PC-3 (cell line): ENCODE measurements at regions of chr17 and their contacts with region 1.

Region 1: DNA sequence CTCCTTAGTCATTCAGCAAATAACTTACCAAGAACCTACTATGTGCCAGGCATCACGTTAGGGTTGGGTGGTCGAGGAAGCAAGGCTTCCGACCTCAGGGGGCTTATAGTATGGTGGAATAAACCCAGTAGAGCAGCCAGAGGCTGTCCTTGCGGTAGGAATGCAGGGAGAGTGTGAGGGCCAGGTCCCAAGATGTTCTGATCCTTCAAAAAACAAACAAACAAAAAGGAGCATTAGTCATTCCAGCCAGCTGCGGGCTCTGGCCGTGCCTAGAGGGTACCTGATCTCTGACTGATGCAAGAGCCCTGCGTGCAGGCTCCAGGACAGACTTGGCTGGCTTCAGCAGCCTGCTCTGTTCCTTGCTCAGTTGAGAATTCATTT is 18.2 kb downstream of the CYB5D2 start:
- DNase-seq: peak; percentile 86
- ATAC-seq: peak; percentile 96
- H3K4me3 ChIP-seq: no peak overlapping the region
- H3K27ac ChIP-seq: peak overlapping the region; percentile 80
- H3K4me1 ChIP-seq: peaks cover 26% of the 10 kb centered on the region
- H3K27me3 ChIP-seq: no peaks in the 10 kb centered on the region
- CTCF ChIP-seq: no peak; the same call in 1 of the 2 replicates

Region 2: DNA sequence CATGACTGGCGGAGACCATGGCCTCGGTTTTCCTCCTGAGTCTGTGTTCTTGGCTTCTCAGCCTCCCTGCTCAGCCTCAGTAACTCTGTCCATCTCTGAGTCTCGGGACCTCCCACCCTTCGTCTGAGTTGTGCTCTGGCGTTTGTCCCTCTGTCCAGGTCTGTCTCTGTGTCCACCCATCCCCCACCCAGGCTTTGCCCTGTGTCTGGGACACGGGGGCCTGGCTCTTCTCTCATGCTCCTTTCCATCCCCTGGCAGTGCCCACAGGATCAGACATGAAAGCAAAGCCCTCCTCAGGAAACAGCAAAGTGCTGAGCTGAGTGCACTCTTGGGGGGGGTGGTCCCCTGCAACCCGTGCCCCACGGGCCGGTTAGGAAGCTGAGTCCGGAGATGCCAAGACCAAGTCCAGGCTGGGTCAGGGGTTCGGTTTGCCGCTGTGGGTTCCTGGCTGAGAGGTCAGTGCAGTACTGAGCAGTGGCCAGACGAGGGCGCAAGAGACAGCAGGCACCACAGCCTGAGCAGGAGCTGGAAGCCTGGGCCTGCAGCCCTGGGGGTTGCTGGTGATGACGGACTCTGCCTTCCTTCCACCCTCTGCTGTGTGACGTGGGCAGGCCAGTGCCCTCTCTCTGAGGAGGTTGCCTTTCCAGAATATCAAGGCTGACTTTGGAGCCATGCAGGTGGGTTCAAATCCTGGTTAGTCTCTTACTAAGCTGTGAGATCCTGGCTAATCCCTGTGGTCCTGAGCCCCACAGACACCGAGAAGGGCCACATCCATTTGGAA is 247.4 kb before region 1 on chr17:
- CTCF ChIA-PET with region 1: no interaction called
- POLR2A ChIA-PET with region 1: no interaction called
- intact Hi-C with region 1: no loop called
- DNase-seq: peak; percentile 72
- ATAC-seq: peak; percentile 93
- H3K4me3 ChIP-seq: no peak overlapping the region
- H3K27ac ChIP-seq: no peak overlapping the region
- H3K4me1 ChIP-seq: no peaks in the 10 kb centered on the region
- H3K27me3 ChIP-seq: no peaks in the 10 kb centered on the region
- CTCF ChIP-seq: peak; percentile 83

Region 3: DNA sequence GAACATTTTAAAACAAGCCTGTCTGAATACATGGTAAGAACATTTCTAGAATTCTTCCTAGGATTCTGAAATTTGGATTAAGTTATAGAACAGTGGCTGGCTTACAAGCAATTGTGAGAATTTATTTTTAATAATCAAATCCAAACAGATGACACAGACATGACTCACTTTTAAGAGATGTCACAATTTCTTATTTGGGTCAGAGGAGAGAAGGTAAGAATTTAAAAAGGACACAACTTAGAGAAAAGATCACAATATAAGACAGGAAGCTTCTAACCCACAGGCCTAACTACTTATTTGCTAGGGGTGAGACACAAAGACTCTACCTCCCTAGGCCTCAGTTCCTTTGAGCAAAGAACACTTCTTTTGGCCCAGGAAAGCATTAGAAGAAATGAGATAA is 51.0 kb before region 1 on chr17:
- CTCF ChIA-PET with region 1: no interaction called
- POLR2A ChIA-PET with region 1: interaction called, 4 read pairs
- intact Hi-C with region 1: loop called (anchors 2 kb)
- DNase-seq: peak; percentile 78
- ATAC-seq: peak; percentile 99
- H3K4me3 ChIP-seq: no peak overlapping the region
- H3K27ac ChIP-seq: peak overlapping the region; percentile 80
- H3K4me1 ChIP-seq: peaks cover 17% of the 10 kb centered on the region
- H3K27me3 ChIP-seq: no peaks in the 10 kb centered on the region
- CTCF ChIP-seq: no peak